Esophagus muscularis mucosa (tissue), 4 donors: ENCODE measurements at regions of chr5 and their contacts with region 1.

Region 1: DNA sequence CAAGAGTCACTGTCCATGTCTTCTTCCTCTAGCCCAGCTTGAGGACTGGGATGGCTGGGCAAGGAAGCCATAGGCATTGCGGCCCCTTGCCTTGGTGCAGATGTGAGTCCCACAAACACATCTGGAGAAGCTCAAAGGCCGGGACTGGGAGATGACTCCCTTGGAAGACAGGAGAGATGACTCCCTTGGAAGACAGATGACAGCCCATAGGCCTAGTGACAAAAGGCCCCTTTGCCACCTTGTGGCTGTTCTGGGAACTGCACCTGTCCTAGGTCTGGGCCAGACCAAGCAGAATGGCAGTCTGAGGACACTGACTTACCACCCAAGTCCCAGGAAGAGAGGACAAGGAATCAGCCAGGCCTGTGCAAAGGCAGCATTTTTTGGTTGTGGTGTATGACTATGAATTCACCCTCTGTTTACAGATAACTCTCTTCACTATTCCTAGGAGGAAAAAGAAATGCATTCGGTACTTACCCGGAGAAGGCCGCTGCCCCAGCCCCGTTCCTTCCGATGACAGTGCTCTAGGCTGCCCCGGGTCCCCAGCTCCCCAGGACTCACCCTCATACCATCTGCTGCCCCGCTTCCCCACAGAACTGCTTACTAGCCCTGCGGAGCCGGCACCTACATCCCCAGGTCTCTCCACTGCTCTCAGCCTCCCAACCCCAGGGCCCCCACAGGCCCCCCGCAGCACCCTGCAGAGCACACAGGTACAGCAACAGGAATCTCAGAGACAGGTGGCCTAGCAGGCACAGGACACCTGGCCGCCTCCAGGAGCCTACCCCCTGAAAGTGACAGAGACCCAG is 30.8 kb downstream of the SKP1 start:
- DNase-seq: peak; percentile 93
- H3K4me3 ChIP-seq: no peak overlapping the region
- H3K27ac ChIP-seq: no peak overlapping the region
- H3K4me1 ChIP-seq: peaks cover 34 to 62% (median 39%) of the 10 kb centered on the region in 4 donors
- H3K27me3 ChIP-seq: no peaks in the 10 kb centered on the region
- CTCF ChIP-seq: peak; percentile 90 to 99 (median 90)
- EP300 ChIP-seq: no peak
- POLR2A ChIP-seq: no peak

Region 2: GRCh38 chr5:134038138-134038537 is 107.8 kb before region 1 on chr5:
- intact Hi-C with region 1: loop called (anchors 5 kb)
- DNase-seq: no peak
- H3K4me3 ChIP-seq: no peak overlapping the region
- H3K27ac ChIP-seq: no peak overlapping the region
- H3K4me1 ChIP-seq: no peaks in the 10 kb centered on the region
- H3K27me3 ChIP-seq: no peaks in the 10 kb centered on the region
- CTCF ChIP-seq: no peak
- EP300 ChIP-seq: no peak
- POLR2A ChIP-seq: no peak